Activated CD4-positive, alpha-beta memory T cell treated with anti-CD3 and anti-CD28 coated beads for 36 hours (primary cell): ENCODE measurements at regions of chr14 and their contacts with region 1.

Region 1: DNA sequence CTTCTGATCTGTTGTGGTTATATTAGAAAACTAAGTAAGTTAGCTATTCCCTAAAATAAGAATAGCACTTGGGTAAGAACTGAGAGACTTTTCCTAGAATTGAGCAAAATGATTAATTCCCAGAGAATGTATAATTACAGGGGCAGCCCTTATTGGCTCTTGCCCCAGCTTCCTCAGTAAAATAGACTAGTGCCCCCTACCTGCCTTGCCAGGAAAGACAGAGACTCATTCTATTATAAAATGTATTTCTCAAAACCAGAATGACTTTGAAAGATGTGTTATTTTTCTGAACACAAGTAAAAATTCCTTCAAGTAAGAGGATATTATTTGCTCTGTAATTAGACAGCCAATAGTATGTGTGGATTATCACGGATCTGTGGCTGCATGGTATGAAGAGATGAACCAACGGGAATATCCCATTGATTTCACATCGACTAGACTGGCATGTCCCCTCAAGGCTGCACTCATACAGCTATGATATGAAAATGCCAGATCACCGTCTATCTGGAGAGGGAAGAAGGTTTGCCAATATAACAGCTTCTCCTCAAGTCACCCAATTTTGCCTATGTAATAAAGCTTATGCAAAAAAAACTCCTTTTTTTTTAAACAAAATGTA is 7.4 kb upstream of the GLRX5 start:
- DNase-seq: peak; percentile 68
- H3K4me3 Mint-ChIP-seq: peak overlapping the region; percentile 10
- H3K27ac Mint-ChIP-seq: peak overlapping the region; percentile 75
- H3K4me1 Mint-ChIP-seq: peaks cover 79% of the 10 kb centered on the region
- H3K27me3 Mint-ChIP-seq: no peaks in the 10 kb centered on the region

Region 2: GRCh38 chr14:95265106-95266094 is 262.1 kb before region 1 on chr14:
- CTCF ChIA-PET with region 1: interaction called, 4 read pairs
- POLR2A ChIA-PET with region 1: interaction called, 3 read pairs
- intact Hi-C with region 1: loop called (anchors 1 kb)
- DNase-seq: peak; percentile 72
- H3K4me3 Mint-ChIP-seq: no peak overlapping the region
- H3K27ac Mint-ChIP-seq: no peak overlapping the region
- H3K4me1 Mint-ChIP-seq: peaks cover 46% of the 10 kb centered on the region
- H3K27me3 Mint-ChIP-seq: peaks cover 1% of the 10 kb centered on the region

Region 3: DNA sequence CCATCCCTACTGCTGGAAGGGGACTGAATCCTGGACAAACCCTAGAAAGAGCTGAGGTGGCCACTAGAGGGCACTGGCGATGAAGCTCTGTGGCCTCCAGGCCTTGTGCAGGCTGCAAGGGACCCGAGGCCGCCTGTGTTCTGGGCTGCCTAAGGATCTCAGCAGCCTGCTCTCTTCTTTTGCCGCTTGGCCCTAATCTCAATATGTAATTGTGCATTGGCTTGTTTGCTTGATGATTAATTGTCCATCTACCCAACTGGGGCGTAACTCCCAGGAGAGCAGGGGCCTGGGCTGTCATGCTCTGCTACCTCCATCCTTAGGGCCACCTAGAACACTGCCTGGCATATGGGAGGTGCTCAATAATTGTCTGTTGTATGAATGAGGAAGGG is 84.9 kb before region 1 on chr14:
- CTCF ChIA-PET with region 1: interaction called, 202 read pairs
- POLR2A ChIA-PET with region 1: interaction called, 9 read pairs
- intact Hi-C with region 1: loop called (anchors 1 kb)
- DNase-seq: peak; percentile 83
- H3K4me3 Mint-ChIP-seq: no peak overlapping the region
- H3K27ac Mint-ChIP-seq: peak overlapping the region; percentile 35
- H3K4me1 Mint-ChIP-seq: peaks cover 10% of the 10 kb centered on the region
- H3K27me3 Mint-ChIP-seq: no peaks in the 10 kb centered on the region

Region 4: DNA sequence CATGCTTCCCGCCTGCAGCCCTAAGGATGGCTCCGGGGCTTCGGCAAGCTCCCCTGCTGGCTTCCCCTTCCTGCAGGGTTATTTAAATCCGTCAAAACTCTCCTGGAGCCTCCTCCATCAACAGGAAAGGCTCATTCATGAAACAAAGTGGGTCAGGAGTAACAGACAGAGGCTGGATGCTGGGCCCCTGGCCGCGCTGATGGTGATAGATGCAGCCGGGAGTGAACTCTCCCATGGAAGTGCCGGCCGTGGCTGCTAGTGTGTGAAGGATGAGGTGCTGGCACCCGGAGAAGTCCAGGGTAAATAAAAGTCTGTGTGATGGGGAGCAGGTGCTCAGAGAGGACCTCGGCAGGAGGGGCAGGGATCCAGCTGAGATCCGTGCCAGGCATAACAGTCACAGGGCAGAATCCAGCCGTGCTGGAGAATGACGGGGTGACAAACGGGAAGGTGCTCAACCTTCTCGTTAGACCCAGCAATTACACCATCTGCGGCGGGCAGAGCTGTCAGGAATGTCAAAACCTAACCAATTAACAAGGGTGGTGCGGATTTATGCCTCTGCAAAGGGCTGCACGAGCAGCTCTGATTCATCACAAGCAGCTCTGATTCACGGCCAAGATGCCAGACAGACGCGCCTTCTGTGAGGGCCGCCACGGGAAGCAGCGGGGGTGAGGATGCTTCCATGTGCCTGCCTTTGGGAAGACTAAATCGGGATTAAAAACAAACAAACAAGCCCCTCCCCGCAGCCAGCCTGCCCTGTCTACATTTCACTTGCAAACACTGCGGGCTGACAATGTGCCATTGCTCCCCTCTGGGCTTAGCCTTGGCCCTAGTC is 66.6 kb before region 1 on chr14:
- CTCF ChIA-PET with region 1: interaction called, 26 read pairs
- POLR2A ChIA-PET with region 1: interaction called, 5 read pairs
- intact Hi-C with region 1: no loop called
- DNase-seq: no peak
- H3K4me3 Mint-ChIP-seq: no peak overlapping the region
- H3K27ac Mint-ChIP-seq: peak overlapping the region; percentile 44
- H3K4me1 Mint-ChIP-seq: peaks cover 53% of the 10 kb centered on the region
- H3K27me3 Mint-ChIP-seq: no peaks in the 10 kb centered on the region

Region 5: GRCh38 chr14:95495538-95496025 is 31.9 kb before region 1 on chr14:
- CTCF ChIA-PET with region 1: interaction called, 14 read pairs
- POLR2A ChIA-PET with region 1: interaction called, 16 read pairs
- intact Hi-C with region 1: loop called (anchors 5 kb)
- DNase-seq: peak; percentile 64
- H3K4me3 Mint-ChIP-seq: peak overlapping the region; percentile 46
- H3K27ac Mint-ChIP-seq: peak overlapping the region; percentile 75
- H3K4me1 Mint-ChIP-seq: peaks cover 65% of the 10 kb centered on the region
- H3K27me3 Mint-ChIP-seq: no peaks in the 10 kb centered on the region

Region 6: DNA sequence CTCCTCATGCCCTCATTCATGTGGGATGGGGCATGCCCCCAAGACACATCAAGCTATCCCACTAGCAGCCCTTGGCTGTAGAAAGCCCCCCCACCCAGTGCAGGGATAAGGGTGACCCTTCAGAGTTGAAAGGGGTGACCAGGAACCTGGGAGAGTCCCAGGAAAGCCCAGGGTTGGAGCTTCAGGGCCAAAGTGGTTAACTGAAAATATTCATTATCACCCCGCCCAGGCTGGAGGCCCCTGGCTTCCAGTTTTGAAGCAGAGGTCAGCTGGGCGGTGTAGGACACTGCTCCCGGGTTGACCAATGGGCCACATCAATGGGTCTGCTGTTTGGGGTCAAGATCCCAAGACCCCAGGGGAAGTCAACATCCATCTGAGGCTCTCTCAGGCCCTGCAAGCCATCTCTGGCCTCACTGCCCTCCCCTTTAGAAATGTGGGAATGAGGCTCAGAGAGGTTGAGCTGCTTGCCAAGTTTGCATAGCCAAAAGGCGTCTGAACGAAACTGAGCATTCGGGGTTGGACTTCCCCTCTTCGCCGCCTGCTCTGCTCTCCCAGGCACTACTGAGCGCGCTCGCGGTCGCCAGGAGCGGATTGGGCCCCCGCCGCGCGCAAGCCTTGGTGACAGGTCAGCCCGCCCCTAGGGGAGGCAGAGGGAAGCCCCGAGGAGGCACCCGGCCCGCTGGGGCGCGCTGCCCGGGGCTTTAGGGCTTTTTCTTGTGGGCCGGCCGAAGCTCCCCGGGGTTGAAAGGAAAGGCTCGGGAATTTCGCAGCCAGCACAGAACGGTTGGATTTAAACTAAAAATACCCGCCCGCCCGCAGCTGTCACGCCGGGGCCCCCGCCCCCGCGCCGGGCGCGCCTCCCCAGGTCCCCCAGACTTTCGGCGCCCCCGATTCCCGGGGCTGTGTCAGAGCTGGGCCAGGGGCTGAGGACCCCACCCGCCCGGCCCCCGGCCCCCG is 11.6 kb before region 1 on chr14:
- CTCF ChIA-PET with region 1: interaction called, 47 read pairs
- POLR2A ChIA-PET with region 1: interaction called, 9 read pairs
- intact Hi-C with region 1: no loop called
- DNase-seq: peak; percentile 91
- H3K4me3 Mint-ChIP-seq: peak overlapping the region; percentile 90
- H3K27ac Mint-ChIP-seq: peak overlapping the region; percentile 93
- H3K4me1 Mint-ChIP-seq: peaks cover 71% of the 10 kb centered on the region
- H3K27me3 Mint-ChIP-seq: no peaks in the 10 kb centered on the region